GM10248 (cell line): ENCODE measurements at regions of chr3 and their contacts with region 1.

Region 1: GRCh38 chr3:46935168-46935858 is 41.2 kb downstream of the CCDC12 start:
- DNase-seq: no peak
- CTCF ChIP-seq: no peak

Region 2: GRCh38 chr3:46681856-46682540 is 253.3 kb before region 1 on chr3:
- CTCF ChIA-PET with region 1: no interaction called
- POLR2A ChIA-PET with region 1: no interaction called
- DNase-seq: no peak
- CTCF ChIP-seq: no peak

Region 3: DNA sequence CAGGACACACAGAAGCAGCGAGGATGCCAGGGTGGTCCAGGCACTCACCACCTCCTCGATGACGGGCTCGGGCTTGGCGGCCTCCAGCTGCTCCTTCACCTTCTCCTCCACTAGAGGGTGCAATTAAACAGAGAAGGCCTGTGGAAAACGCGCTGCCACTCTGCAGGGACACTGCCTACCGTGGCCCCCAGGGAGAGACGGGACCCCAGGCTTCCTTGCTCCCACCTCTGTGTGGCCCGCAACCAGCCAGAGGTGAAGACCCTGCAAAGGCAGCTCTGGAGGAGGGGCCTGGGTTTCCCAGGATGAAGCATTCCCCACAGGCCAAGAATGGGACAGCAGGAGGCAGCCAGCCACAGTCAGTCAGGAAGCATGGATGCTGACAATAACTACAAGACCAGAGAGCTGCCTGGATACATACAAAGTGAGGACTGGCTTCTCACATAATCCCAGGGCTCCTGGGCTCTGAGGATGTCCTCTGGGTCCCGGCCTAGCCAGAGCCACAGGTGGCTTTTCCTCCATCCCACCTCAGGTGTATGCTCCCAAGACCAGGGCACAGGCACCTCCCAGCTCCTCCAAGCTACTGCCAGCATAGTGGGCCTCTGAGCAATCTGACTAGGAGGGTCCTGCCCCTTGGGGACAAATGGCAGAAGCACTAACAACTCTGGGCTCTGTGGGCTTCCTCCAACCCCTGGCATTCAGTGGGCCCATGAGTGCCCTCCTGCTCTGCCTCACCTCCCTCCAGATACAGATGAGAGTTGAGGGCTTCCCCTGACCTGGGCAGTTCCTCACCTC is 11.6 kb before region 1 on chr3:
- CTCF ChIA-PET with region 1: interaction called, 16 read pairs
- POLR2A ChIA-PET with region 1: no interaction called
- DNase-seq: peak; percentile 76
- CTCF ChIP-seq: peak; percentile 44

Region 4: DNA sequence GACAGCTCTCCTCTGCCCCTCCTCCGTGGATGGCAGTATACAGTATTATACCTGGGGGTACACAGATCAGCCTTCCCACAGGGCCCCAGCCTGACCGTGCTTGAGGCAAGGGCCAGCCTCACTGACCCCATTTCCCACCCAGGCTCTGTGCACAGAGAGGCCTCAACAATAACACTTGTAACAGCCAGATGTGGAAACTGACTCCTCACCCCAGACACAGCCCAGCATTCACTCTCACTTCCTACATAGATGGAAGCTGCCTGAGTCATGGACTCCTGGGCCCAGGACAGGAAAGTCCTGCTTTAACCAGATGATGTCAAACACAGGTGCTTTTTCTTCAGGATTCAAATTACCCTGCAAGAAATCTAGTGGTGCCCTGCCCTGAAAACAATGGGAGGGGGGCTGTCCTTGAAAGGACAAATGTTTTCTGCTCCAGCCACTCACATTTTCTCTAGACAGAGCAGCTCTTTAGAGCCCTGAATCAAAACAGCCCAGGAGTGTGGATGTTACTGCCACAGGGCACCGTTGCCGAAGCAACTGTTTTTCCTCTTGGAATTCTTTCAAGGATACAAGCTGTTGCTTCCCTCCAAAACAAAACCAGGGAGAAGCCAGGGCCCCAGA is 24.9 kb after region 1 on chr3:
- CTCF ChIA-PET with region 1: interaction called, 11 read pairs
- POLR2A ChIA-PET with region 1: no interaction called
- DNase-seq: no peak
- CTCF ChIP-seq: no peak